ENCODE measurements at regions of chr17 and their contacts with region 1.

Region 1: GRCh38 chr17:18904482-18904881 is 46.6 kb downstream of the PRPSAP2 start:
- DNase-seq: no peak
- H3K4me3 ChIP-seq: no peak overlapping the region
- H3K4me3 Mint-ChIP-seq: no peak overlapping the region
- H3K27ac ChIP-seq: no peak overlapping the region
- H3K27ac Mint-ChIP-seq: no peak overlapping the region
- H3K4me1 ChIP-seq: peaks cover 39% of the 10 kb centered on the region
- H3K4me1 Mint-ChIP-seq: peaks cover 24 to 46% (median 29%) of the 10 kb centered on the region in 4 donors
- H3K27me3 ChIP-seq: no peaks in the 10 kb centered on the region
- H3K27me3 Mint-ChIP-seq: no peaks in the 10 kb centered on the region

Region 2: GRCh38 chr17:18920911-18921441 is 16.5 kb after region 1 on chr17:
- CTCF ChIA-PET with region 1: no interaction called
- POLR2A ChIA-PET with region 1: no interaction called
- intact Hi-C with region 1: no loop called
- DNase-seq: no peak
- H3K4me3 ChIP-seq: no peak overlapping the region
- H3K4me3 Mint-ChIP-seq: peak overlapping the region in 7 of 8 donors; percentile 10 to 66 (median 38)
- H3K27ac ChIP-seq: no peak overlapping the region
- H3K27ac Mint-ChIP-seq: peak overlapping the region in 5 of 7 donors; percentile 14 to 72 (median 38)
- H3K4me1 ChIP-seq: peaks cover 50% of the 10 kb centered on the region
- H3K4me1 Mint-ChIP-seq: peaks cover 39 to 69% (median 52%) of the 10 kb centered on the region in 4 donors
- H3K27me3 ChIP-seq: no peaks in the 10 kb centered on the region
- H3K27me3 Mint-ChIP-seq: no peaks in the 10 kb centered on the region

Region 3: DNA sequence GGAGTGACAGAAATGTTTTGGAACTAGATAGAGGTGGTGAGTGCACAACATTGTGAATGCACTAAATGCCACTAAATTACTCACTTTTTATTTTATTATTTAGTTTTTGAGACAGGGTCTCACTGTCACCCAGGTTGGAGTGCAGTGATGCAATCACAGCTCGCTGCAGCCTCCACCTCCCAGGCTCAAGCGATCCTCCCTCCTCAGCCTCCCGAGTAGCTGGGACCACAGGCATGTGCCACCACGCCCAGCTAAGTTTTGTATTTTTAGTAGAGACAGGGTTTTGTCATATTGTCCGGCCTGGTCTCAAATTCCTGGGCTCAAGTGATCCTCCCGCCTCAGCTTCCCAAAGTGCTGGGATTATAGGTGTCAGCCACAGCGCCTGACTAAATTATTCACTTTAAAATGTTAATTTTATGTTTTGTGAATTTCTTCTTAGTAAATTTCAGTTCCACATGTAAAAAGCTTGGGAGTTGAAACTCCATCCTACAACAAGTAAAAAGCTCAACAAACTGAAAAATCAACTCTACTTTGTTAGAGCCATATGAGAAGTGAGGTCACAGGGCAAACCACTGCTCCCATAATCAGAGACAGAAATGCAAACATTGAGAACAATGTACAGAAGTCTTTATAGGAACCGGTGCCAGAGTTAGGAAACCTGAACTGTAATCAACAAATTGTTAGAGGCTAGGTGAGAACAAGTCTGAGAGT is 33.7 kb after region 1 on chr17:
- CTCF ChIA-PET with region 1: no interaction called
- POLR2A ChIA-PET with region 1: no interaction called
- intact Hi-C with region 1: loop called (anchors 5 kb)
- DNase-seq: no peak
- H3K4me3 ChIP-seq: no peak overlapping the region
- H3K4me3 Mint-ChIP-seq: no peak overlapping the region
- H3K27ac ChIP-seq: no peak overlapping the region
- H3K27ac Mint-ChIP-seq: peak overlapping the region in 1 of 7 donors; percentile 8
- H3K4me1 ChIP-seq: peaks cover 2% of the 10 kb centered on the region
- H3K4me1 Mint-ChIP-seq: peaks cover 0 to 8% (median 2%) of the 10 kb centered on the region in 4 donors
- H3K27me3 ChIP-seq: no peaks in the 10 kb centered on the region
- H3K27me3 Mint-ChIP-seq: peaks cover 0 to 4% of the 10 kb centered on the region in 2 donors